ENCODE measurements at regions of chr17 and their contacts with region 1.

Region 1: DNA sequence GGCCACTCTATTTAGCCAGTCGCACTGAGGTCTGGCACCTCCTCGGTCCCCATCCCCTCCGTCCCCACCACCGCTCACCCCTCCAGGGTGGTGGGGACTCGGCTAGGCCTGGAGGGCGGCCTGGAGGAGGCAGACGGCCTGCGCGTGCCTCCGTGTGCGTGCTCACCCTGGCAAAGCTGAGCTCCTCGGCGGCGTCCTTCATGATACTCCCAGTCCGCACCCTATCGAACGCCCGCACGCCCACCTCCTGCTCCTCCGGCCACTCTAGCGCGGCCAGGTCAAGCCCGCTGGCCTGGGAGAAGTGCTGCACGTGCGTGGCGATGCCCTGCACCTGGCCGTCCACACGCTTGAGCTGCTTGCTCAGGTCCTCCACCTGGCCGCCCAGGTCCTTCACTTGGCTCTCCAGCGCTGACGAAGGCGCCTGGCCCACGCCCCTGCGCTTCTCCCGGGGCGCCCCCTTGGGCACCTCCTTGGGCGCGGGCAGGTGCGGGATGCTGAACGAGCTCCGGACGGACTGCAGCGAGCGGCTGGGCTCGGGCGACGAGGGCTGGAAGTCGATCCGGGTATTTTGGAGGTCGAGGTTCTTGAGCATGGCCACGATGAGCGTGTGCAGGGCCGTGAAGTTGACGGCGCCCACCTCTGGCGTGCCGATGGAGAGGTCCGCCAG is 644 bp downstream of the QRICH2 start:
- DNase-seq: no peak
- ATAC-seq: peak in 2 of 4 donors; percentile 8 to 17
- H3K4me3 ChIP-seq: no peak overlapping the region
- H3K27ac ChIP-seq: no peak overlapping the region
- H3K4me1 ChIP-seq: no peaks in the 10 kb centered on the region
- H3K27me3 ChIP-seq: no peaks in the 10 kb centered on the region
- CTCF ChIP-seq: no peak
- POLR2A ChIP-seq: no peak

Region 2: DNA sequence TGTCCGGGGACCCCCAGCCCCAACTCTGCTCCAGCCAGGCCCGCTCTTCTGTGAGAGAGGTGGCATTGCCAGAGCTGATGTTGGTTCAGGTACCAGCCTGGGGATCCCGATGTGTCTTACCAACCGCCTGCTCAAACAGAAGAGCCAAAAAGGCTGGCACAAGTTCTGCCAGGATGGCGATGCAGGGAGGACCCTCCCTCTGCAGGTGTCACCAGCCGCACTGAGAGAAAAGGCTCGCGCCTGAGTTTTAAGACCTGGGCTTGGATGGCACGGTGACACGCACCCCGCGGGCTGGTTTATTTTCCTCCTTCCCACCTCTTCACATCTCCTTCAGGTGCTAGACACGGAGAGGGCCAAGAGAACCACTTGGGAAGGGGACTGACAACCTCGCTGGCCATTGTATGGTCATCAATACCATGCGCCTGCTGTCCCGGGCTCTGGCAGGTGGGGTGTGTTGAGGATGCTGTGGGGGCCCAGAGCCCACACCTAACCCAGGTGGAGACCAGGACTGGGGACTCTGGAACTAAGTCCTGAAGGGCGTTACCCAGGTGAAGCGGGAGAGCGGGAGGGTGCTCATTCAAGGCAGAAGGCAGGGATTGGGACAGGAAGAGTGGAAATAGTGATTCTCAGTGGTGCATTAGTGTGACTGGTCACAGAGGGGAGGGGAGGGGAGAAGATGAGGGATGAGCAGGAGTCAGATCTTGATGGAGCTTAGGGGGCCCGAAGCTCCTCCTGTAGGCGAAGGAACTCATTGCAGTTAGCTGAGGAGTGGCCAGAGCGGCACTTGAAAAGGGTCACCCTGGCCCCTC is 182.6 kb before region 1 on chr17:
- intact Hi-C with region 1: no loop called
- DNase-seq: no peak
- ATAC-seq: no peak
- H3K4me3 ChIP-seq: no peak overlapping the region
- H3K27ac ChIP-seq: no peak overlapping the region
- H3K4me1 ChIP-seq: peaks cover 0 to 3% (median 0%) of the 10 kb centered on the region in 4 donors
- H3K27me3 ChIP-seq: no peaks in the 10 kb centered on the region
- CTCF ChIP-seq: no peak
- POLR2A ChIP-seq: no peak

Region 3: DNA sequence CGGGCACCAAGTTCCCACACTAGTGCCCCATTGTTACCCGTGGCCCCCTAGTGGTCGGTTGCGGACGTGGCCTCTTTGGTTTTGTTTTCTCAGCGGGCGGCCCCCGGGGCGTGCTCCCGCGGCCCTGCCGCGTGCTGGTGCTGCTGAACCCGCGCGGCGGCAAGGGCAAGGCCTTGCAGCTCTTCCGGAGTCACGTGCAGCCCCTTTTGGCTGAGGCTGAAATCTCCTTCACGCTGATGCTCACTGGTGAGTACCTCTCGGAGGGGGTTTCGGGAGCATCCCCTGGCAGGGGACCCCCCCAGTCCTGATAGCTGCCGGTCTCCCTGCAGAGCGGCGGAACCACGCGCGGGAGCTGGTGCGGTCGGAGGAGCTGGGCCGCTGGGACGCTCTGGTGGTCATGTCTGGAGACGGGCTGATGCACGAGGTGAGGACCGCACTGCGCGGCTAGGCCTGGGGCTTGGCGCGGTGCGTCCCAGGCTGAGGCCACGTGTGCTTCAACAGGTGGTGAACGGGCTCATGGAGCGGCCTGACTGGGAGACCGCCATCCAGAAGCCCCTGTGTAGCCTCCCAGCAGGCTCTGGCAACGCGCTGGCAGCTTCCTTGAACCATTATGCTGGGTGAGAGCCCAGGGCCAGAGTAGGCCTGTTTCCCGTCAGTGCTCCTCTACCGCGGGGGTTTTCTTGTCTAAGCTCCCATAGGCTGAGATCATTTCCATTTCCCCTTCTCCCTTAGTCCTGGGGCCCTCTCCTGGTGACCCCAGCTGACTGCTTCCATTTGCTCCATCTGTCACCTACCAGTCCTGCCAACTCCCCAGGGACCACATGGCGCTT is 78.7 kb after region 1 on chr17:
- intact Hi-C with region 1: loop called in 1 of 2 experiments (anchors 5 kb)
- DNase-seq: peak; percentile 81 to 82 (median 81)
- ATAC-seq: peak; percentile 57 to 66 (median 62)
- H3K4me3 ChIP-seq: peak overlapping the region; percentile 51 to 55 (median 54)
- H3K27ac ChIP-seq: no peak overlapping the region
- H3K4me1 ChIP-seq: peaks cover 0 to 34% (median 8%) of the 10 kb centered on the region in 4 donors
- H3K27me3 ChIP-seq: no peaks in the 10 kb centered on the region
- CTCF ChIP-seq: peak; percentile 79 to 91 (median 82)
- POLR2A ChIP-seq: no peak

Region 4: DNA sequence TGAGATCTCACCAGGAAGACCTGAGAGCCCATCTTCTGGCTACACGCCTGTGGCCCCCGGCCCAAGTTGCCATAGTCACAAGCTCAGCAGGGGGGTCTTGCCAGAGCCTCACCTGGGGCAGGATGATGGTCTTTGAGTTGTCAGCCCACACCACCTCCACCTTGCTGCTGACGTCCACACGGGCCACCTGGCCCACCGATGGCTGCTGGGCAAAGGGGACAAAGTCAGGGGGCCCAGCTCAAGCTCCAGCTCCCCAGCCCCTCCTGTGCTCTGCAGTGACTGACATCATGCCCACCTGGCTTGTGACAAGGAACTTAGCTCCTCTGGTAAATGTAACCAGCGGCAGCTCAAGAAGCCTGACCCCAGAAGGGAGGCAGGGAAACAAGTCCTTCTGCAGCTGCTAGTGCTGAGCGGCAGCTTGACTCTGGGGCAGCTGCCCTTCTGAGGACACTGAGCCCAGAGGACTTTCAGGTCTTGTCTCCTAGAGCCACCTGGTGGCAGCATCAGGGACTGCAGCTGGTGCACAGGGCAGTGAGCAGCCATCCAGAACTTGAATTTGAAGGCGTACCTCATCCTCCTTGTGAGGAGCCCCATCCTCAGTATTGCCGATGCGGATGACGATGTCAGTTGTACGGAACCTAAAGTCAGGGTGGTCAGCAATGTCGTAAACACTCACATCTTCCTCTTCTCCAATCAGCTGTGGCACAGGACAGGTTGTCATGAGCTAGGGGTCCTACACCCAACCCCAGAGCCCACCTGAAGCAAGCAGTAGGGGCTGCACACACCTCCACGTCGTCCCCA is 90.5 kb after region 1 on chr17:
- intact Hi-C with region 1: loop called in 1 of 2 experiments (anchors 5 kb)
- DNase-seq: peak; percentile 87
- ATAC-seq: peak; percentile 80 to 96 (median 88)
- H3K4me3 ChIP-seq: no peak overlapping the region
- H3K27ac ChIP-seq: no peak overlapping the region
- H3K4me1 ChIP-seq: no peaks in the 10 kb centered on the region
- H3K27me3 ChIP-seq: no peaks in the 10 kb centered on the region
- CTCF ChIP-seq: peak; percentile 93 to 98 (median 96)
- POLR2A ChIP-seq: no peak

Measured in right lobe of liver (tissue), 6 donors.